Dendritic cell treated with granulocyte-macrophage colony-stimulating factor and Interleukin-4, amounts not matched to agents 40 ng/mL and 50 ng/mL, for 4 days (primary cell): ENCODE measurements at regions of chr6 and their contacts with region 1.

Region 1: DNA sequence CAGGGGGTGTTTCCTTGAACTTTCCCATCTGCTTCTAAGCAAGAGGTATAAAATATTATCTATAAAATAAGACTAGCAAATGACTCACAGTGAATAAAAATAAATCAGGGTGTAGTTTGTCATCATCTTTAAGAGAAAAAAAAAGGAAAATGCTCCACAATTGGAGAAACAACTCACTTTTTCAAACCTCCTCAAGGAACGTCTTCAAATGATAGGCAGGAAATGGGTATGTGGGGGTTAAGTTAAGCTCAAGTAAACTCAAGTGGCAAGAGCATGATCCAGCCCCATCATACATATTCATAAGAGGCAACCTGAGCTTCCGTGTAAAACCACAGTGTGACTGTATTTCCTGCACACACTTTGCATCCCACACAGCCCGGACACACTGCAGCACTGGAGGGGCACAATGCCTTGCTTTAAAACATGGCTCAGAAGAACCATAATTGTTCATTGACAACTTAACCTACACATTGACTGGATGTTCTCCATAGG is 58.5 kb upstream of the CEP85L start:
- H3K4me3 Mint-ChIP-seq: no peak overlapping the region
- H3K27ac Mint-ChIP-seq: no peak overlapping the region
- H3K4me1 Mint-ChIP-seq: peaks cover 38% of the 10 kb centered on the region
- H3K27me3 Mint-ChIP-seq: peaks cover 5% of the 10 kb centered on the region

Region 2: GRCh38 chr6:118485601-118486550 is 224.0 kb before region 1 on chr6:
- intact Hi-C with region 1: no loop called
- H3K4me3 Mint-ChIP-seq: no peak overlapping the region
- H3K27ac Mint-ChIP-seq: no peak overlapping the region
- H3K4me1 Mint-ChIP-seq: peaks cover 6% of the 10 kb centered on the region
- H3K27me3 Mint-ChIP-seq: no peaks in the 10 kb centered on the region

Region 3: DNA sequence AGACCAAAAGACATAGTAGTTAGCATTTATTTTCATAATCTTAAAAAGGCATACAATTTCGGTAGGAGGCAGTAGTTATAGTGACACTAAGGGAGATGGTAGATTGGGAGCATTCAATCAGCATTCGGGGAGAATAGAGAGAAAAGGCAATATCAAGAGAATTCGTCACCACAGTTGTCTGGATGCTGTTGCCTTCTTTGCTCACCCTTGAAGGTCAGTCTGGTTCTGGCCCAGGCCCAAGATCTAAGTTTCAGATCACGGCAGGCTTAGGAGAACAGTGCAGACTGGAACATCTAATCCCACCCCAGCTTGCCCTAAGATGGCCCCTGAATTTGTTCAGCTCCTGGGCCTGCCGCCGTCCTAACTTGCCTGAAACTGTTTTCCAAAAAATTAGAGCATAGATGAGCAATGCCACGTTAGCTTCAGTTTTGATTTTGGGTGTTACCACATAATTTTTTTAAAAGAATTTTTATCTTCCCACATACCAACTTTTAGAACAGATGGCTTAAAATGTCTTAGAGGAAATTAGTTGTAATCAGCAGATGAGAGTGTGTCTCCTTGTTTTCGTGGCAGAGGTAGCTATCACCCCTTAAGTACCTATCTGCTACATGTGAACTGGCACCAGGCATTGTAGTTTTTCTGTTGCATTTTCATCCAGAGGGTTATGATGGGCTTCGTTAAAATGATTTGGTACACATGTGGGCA is 50.2 kb before region 1 on chr6:
- intact Hi-C with region 1: loop called (anchors 5 kb)
- H3K4me3 Mint-ChIP-seq: no peak overlapping the region
- H3K27ac Mint-ChIP-seq: no peak overlapping the region
- H3K4me1 Mint-ChIP-seq: peaks cover 5% of the 10 kb centered on the region
- H3K27me3 Mint-ChIP-seq: peaks cover 4% of the 10 kb centered on the region

Region 4: GRCh38 chr6:118735320-118735719 is 25.4 kb after region 1 on chr6:
- intact Hi-C with region 1: no loop called
- H3K4me3 Mint-ChIP-seq: no peak overlapping the region
- H3K27ac Mint-ChIP-seq: no peak overlapping the region
- H3K4me1 Mint-ChIP-seq: peaks cover 29% of the 10 kb centered on the region
- H3K27me3 Mint-ChIP-seq: no peaks in the 10 kb centered on the region

Region 5: DNA sequence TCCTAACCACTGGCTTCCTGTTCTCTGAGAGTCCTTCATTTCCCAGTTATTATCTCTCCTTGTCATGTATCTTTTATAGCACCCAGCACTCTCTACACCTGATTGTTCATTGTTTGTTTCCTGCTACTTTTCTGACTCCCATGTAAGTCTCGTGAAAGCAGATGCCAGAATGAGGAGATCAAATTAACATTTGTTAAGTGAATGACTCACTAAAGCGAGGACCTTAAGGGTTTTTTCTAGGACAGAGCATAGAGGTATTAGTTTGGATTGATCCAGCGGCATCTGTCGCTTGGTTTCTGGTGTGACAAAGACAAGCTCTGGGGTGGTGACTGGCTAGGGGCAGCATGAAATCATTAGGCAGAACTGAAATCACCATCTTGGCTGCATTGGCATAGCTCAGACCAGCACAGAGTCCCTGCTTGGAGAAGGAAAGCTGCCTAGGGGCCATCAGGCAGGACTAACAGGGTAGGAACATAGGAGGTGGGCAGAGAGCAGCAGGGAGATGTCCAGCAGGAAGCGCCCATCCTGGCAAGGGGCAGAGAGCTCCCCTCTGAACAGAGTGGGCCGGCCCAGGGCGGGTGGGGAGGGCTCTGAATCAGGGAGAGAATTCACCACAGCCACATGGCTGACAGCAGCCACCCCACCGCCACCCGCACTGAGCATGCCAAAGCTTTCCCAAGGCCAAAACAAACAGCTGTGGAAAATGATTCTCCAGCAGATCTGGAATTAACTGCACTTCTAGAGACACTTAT is 38.6 kb after region 1 on chr6:
- intact Hi-C with region 1: loop called (anchors 5 kb)
- H3K4me3 Mint-ChIP-seq: no peak overlapping the region
- H3K27ac Mint-ChIP-seq: peak overlapping the region; percentile 61
- H3K4me1 Mint-ChIP-seq: peaks cover 72% of the 10 kb centered on the region
- H3K27me3 Mint-ChIP-seq: no peaks in the 10 kb centered on the region

Region 6: DNA sequence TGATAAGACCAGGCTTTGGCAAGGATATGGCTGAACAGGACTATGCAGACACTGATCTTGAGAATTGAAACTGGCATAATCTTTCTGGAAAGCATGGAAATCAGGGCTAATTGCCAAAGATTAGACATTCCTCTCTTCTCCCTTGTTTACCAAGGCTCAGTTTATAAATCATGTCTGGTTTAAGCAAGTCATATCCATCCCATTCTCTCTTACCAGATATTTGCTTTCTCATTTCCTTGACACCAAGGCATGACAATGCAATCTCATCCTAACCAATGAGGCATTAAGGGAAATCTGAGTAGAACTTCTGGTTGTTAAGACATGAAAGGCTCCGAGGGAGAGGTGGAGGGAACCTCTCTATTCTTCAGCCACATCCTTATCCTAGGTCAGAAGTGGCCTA is 51.7 kb after region 1 on chr6:
- intact Hi-C with region 1: no loop called
- H3K4me3 Mint-ChIP-seq: no peak overlapping the region
- H3K27ac Mint-ChIP-seq: peak overlapping the region; percentile 52
- H3K4me1 Mint-ChIP-seq: peaks cover 71% of the 10 kb centered on the region
- H3K27me3 Mint-ChIP-seq: no peaks in the 10 kb centered on the region